GM12878 (cell line): ENCODE measurements at regions of chr14 and their contacts with region 1.

Region 1: DNA sequence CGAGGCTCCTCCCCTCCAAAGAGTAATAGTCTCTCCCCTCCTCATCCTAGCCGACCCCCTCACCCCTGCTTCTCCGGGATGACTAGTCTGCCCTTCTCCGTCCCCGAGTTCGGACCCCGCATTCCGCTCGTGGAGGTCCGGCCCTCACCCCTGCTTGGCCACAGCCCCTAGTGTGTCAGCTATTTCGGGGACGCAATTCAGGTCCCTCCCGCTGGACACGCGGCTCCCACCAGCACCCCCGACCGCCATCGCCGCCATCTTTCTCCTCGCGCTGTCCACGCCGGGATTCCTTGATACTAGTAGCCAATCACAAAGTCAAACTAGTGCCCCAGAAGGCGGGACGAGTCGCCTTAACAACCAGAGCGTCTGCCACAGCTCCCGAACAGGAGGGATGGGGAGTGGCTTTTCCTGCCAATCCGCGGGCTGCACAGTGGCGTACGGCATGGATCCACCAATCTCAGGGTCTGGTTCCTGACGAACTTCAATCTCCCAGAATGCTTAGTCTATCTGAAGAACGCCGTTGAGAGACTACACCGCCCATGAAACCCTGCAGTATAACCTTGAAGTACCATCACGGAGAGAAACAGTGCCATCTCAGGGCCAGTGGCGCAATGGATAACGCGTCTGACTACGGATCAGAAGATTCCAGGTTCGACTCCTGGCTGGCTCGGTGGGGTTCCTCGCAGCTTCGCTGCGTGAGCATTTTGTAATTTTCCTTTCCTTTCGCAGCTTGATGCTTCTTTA is at the start of gene PRMT5:
- DNase-seq: peak; percentile 100
- ATAC-seq: peak; percentile 97
- H3K4me3 ChIP-seq: peak within 1 kb of the TSS; percentile 91
- H3K27ac ChIP-seq: peak within 1 kb of the TSS; percentile 81
- H3K4me1 ChIP-seq: peaks cover 16% of the 10 kb centered on the region; the same call in 1 of the 2 replicates
- H3K27me3 ChIP-seq: no peaks in the 10 kb centered on the region
- CTCF ChIP-seq: peak in 1 of 3 experiments; percentile 7; a peak in 1 of 6 replicates
- EP300 ChIP-seq: no peak
- POLR2A ChIP-seq: peak; percentile 97
- RAD21 ChIP-seq: no peak
- polyA plus RNA-seq, gene PRMT5: 54.3 to 71.6 TPM

Region 2: DNA sequence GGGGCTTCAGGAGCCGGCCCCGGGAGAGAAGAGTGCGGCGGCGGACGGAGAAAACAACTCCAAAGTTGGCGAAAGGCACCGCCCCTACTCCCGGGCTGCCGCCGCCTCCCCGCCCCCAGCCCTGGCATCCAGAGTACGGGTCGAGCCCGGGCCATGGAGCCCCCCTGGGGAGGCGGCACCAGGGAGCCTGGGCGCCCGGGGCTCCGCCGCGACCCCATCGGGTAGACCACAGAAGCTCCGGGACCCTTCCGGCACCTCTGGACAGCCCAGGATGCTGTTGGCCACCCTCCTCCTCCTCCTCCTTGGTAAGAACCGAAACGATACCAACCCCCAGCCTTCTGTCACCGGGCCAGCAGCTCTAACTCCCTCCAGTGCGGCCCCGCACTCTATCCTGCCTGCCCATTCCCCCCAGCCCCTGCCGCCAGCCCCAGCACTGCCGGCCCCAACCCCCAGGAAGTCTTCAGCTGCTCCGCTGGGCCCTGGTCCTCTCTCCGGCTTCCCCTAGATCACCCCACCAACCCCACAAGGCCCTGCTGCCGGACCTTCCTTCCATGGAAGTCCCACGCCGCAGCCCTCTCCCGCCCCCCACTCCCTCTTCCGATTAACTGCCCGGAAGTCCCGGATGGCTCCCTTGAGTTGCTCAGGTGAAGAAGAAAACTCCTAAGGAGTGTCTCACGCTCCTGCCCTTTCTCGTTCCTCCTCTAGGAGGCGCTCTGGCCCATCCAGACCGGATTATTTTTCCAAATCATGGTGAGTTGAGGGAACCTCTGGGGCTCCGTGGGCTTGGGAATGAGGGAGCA is 57.0 kb before region 1 on chr14:
- CTCF ChIA-PET with region 1: interaction called, 12 read pairs
- POLR2A ChIA-PET with region 1: interaction called, 6 read pairs
- RAD21 ChIA-PET with region 1: no interaction called
- SMC1A ChIA-PET with region 1: interaction called, 9 read pairs
- in situ Hi-C with region 1: no loop called
- intact Hi-C with region 1: no loop called
- DNase-seq: no peak
- ATAC-seq: peak; percentile 56
- H3K4me3 ChIP-seq: peak overlapping the region; percentile 74
- H3K27ac ChIP-seq: peak overlapping the region; percentile 93
- H3K4me1 ChIP-seq: peaks cover 8% of the 10 kb centered on the region
- H3K27me3 ChIP-seq: no peaks in the 10 kb centered on the region
- CTCF ChIP-seq: peak; percentile 95 to 98 (median 95)
- EP300 ChIP-seq: no peak
- POLR2A ChIP-seq: no peak
- RAD21 ChIP-seq: peak; percentile 75

Region 3: DNA sequence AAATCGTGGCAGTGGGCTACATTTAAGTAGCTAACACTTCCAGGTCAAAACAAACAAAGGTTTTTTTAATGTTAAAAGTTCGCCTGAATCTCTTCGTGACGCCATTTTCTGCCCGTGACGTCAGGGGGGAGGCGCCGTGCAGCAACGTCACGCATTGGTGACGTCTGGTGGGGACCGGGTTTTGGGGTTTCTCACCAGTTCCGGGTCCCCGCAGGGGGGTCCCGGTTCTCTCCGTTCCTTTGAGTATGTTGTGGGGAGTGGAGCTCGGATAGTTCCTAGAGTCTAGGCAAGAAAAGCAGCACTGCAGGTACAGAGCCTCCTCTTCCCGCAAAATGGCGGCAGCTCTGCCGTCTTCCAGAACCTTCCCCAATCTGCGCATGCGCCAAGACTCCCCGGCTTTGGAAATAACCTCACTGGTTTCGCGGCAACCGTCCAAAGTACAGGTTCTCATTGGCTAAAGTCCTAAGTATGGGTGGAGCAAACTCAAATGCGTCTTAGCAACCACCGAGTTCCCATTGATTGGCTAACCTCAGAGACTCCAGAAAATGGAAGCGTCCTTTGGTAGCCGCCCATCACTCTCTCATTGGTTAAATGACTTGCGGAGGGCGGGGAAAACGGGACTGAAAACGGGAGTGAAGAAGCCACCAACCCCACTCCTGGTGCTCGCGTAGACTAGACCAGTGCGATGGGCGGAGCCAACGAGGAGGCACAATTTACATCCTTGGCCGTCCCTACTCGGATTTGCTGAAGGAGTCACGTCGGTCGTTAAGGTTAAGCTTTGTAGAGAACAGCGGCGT is 10.3 kb before region 1 on chr14 and contains the start of gene RBM23:
- CTCF ChIA-PET with region 1: interaction called, 56 read pairs
- POLR2A ChIA-PET with region 1: interaction called, 73 read pairs
- RAD21 ChIA-PET with region 1: interaction called, 17 read pairs
- SMC1A ChIA-PET with region 1: interaction called, 19 read pairs
- in situ Hi-C with region 1: no loop called
- intact Hi-C with region 1: loop called (anchors 1 kb)
- DNase-seq: peak; percentile 100
- ATAC-seq: peak; percentile 98
- H3K4me3 ChIP-seq: peak within 1 kb of the TSS; percentile 96
- H3K27ac ChIP-seq: peak within 1 kb of the TSS; percentile 97
- H3K4me1 ChIP-seq: peaks cover 8% of the 10 kb centered on the region
- H3K27me3 ChIP-seq: no peaks in the 10 kb centered on the region
- CTCF ChIP-seq: no peak
- EP300 ChIP-seq: no peak
- POLR2A ChIP-seq: peak; percentile 87
- RAD21 ChIP-seq: no peak
- polyA plus RNA-seq, gene RBM23: 60.7 to 65.7 TPM

Region 4: DNA sequence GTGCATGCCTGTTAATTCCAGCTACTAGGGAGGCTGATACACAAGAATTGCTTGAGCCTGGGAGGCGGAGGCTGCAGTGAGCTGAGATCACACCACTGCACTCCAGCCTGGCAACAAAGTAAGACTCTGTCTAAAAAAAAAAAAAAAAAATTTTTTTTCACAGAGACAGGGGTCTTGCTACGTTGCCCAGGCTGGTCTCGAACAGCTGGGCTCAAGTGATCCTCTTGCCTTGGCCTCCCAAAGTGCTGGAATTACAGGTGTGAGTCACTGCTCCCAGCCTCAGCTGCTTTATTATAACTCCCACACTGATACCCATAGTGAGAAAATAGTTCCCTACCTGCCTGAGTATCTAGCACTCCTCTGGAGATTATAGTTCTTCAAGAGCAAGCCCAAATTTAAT is 16.4 kb after region 1 on chr14:
- CTCF ChIA-PET with region 1: interaction called, 31 read pairs
- POLR2A ChIA-PET with region 1: interaction called, 4 read pairs
- RAD21 ChIA-PET with region 1: no interaction called
- SMC1A ChIA-PET with region 1: interaction called, 3 read pairs
- in situ Hi-C with region 1: no loop called
- intact Hi-C with region 1: no loop called
- DNase-seq: no peak
- ATAC-seq: no peak
- H3K4me3 ChIP-seq: no peak overlapping the region
- H3K27ac ChIP-seq: no peak overlapping the region
- H3K4me1 ChIP-seq: no peaks in the 10 kb centered on the region
- H3K27me3 ChIP-seq: no peaks in the 10 kb centered on the region
- CTCF ChIP-seq: no peak
- EP300 ChIP-seq: no peak
- POLR2A ChIP-seq: no peak
- RAD21 ChIP-seq: no peak

Region 5: GRCh38 chr14:22973217-22974032 is 44.1 kb after region 1 on chr14:
- CTCF ChIA-PET with region 1: interaction called, 34 read pairs
- POLR2A ChIA-PET with region 1: no interaction called
- RAD21 ChIA-PET with region 1: interaction called, 18 read pairs
- SMC1A ChIA-PET with region 1: interaction called, 13 read pairs
- in situ Hi-C with region 1: no loop called
- intact Hi-C with region 1: no loop called
- DNase-seq: no peak
- ATAC-seq: peak; percentile 85
- H3K4me3 ChIP-seq: no peak overlapping the region
- H3K27ac ChIP-seq: no peak overlapping the region
- H3K4me1 ChIP-seq: no peaks in the 10 kb centered on the region
- H3K27me3 ChIP-seq: no peaks in the 10 kb centered on the region
- CTCF ChIP-seq: peak; percentile 65 to 82 (median 70)
- EP300 ChIP-seq: no peak
- POLR2A ChIP-seq: no peak
- RAD21 ChIP-seq: peak; percentile 61

Region 6: GRCh38 chr14:23006544-23007419 is 77.5 kb after region 1 on chr14:
- CTCF ChIA-PET with region 1: interaction called, 15 read pairs
- POLR2A ChIA-PET with region 1: interaction called, 8 read pairs
- RAD21 ChIA-PET with region 1: interaction called, 6 read pairs
- SMC1A ChIA-PET with region 1: interaction called, 3 read pairs
- in situ Hi-C with region 1: no loop called
- intact Hi-C with region 1: no loop called
- DNase-seq: peak; percentile 96
- ATAC-seq: peak; percentile 98
- H3K4me3 ChIP-seq: peak overlapping the region; percentile 71
- H3K27ac ChIP-seq: peak overlapping the region; percentile 91
- H3K4me1 ChIP-seq: peaks cover 21% of the 10 kb centered on the region
- H3K27me3 ChIP-seq: no peaks in the 10 kb centered on the region
- CTCF ChIP-seq: peak in 2 of 3 experiments; percentile 26 to 30; a peak in 3 of 6 replicates
- EP300 ChIP-seq: no peak
- POLR2A ChIP-seq: peak; percentile 99
- RAD21 ChIP-seq: no peak